ENCODE measurements at regions of chr13 and their contacts with region 1.

Region 1: GRCh38 chr13:101474419-101474957 is 22.0 kb downstream of the ITGBL1 start:
- DNase-seq: peak; percentile 73
- H3K4me3 Mint-ChIP-seq: no peak overlapping the region
- H3K27ac Mint-ChIP-seq: no peak overlapping the region
- H3K4me1 Mint-ChIP-seq: peaks cover 19% of the 10 kb centered on the region
- H3K27me3 Mint-ChIP-seq: no peaks in the 10 kb centered on the region
- CTCF ChIP-seq: peak; percentile 54

Region 2: DNA sequence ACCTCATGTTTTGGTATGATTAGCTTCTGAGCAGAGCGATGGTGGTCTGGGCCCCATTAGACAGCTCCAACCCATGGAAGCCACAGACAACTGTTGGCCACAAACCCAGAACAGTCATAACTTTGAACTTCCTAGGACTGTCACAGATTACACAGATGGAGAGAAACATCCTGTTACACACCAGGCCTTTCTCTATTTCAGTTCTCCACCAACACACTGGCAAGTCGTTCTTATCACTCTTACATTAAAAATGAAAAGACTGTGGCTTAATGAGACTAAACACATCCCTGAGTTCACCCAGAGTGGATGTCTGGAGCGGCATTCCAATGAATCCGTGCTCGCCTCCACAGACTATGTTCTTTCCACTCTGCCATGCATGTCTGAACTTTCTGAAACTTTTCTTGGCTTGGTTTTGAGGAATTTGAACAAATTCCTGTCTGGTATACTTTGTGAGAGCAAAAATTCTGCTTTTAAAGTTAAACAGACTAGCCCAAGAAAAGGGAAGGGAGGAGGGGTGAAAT is 167.2 kb before region 1 on chr13:
- CTCF ChIA-PET with region 1: no interaction called
- POLR2A ChIA-PET with region 1: no interaction called
- intact Hi-C with region 1: loop called (anchors 10 kb)
- DNase-seq: no peak
- H3K4me3 Mint-ChIP-seq: no peak overlapping the region
- H3K27ac Mint-ChIP-seq: no peak overlapping the region
- H3K4me1 Mint-ChIP-seq: peaks cover 24% of the 10 kb centered on the region
- H3K27me3 Mint-ChIP-seq: no peaks in the 10 kb centered on the region
- CTCF ChIP-seq: no peak

Region 3: DNA sequence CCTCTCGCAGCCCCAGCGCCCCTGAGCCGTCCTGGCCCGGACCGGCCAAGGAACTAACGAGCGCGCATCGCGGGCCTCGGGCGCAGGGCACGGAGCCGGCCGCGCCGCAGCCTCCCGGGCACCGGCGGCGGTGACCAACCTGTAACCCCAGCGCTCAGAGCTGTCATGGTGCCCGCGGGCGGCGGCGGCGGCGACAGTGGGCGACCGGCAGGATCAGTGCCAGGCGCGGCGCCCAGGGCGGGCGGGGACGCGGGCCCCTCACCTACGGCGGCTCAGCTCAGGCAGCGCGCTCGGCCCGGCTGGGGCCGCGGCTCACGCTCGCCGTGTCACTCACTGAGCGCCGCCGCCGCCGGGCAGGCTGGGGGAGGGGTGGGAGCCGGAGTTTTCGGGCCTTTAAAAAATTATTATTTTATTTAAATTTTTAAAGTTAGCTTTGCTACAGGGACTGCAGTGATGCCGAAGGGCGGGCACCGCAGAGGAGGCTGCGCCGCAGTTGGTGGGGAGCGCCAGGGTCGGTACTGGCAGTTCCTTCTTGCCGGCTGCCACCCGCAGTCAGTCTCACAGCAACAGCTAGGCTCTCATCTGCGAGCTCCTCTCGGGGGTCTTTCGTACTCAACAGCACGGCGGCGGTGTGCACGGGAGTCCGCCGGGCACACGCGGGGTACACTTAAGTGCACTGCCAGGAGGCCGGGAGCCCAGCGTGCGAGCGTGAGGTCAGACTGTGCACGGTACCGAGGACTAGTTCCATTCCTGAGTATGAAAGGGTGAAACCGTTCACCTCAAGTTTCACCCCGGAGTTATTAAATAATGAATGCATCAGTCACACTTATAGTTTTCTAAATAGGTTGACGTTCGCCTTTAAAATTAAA is 58.1 kb before region 1 on chr13 and contains the start of gene NALCN:
- CTCF ChIA-PET with region 1: interaction called, 3 read pairs
- POLR2A ChIA-PET with region 1: no interaction called
- intact Hi-C with region 1: loop called (anchors 5 kb)
- DNase-seq: peak; percentile 47
- H3K4me3 Mint-ChIP-seq: peak within 1 kb of the TSS; percentile 75
- H3K27ac Mint-ChIP-seq: peak within 1 kb of the TSS; percentile 79
- H3K4me1 Mint-ChIP-seq: peaks cover 5% of the 10 kb centered on the region
- H3K27me3 Mint-ChIP-seq: no peaks in the 10 kb centered on the region
- CTCF ChIP-seq: no peak
- total RNA-seq, gene NALCN: 8.5 and 10.4 TPM in 2 replicates

Measured in MCF 10A (cell line).